ENCODE measurements at regions of chr7 and their contacts with region 1.

Region 1: GRCh38 chr7:71942115-71942514 is 470.0 kb downstream of the CALN1 start:
- DNase-seq: no peak
- ATAC-seq: no peak

Region 2: DNA sequence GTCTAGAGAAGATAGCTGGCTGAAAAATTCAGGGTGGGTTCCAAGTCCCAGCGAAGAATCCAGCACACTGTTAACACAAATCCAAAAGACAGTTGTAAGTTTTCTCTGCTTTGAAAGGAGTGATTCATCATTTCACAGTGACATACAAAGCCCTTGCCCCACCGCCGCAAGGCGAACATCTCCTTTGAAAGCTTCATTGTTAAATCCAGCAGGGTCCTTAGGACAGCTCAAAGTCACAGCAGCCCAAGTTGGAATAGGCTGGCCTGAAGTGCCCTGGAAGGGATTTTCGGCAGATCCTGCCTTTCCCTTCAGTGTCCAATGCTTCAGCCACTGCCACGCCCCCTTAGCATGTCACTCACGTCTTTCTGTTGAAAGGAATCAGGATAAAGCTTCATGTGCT is 56.1 kb before region 1 on chr7:
- intact Hi-C with region 1: loop called in 1 of 2 experiments (anchors 10 kb)
- DNase-seq: no peak
- ATAC-seq: no peak